Left cardiac atrium (tissue), 4 donors: ENCODE measurements at regions of chr14 and their contacts with region 1.

Region 1: DNA sequence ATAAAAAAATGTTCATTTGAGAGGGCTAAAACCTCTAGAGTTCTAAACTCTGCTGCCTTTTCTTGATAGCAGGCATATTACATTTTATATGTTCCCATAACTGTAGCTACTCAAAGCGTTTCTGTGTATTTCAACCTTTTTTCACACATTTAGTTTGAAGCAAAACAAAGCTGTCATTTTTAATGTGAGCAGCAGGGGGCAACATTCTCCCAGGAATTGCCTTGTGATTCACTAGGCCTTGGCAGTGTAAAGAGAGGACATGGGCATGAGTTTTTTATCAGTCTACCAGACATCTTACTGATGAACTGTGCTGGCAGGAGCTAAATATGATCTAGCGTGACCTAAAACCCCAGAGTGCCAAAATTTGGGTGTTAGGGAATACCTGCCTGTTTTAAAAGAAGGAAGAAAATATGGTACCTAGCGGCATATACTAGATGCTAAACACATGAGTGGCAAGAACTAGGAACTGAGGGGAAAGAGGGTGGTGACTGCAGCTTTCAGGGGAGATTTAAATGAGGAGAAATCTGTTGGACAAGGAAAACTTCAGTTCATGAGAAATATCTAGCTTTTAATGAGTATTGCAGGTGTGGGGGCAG is 65.3 kb downstream of the IFT43 start:
- DNase-seq: no peak
- ATAC-seq: peak; percentile 78 to 80

Region 2: GRCh38 chr14:76352639-76353281 is 301.9 kb after region 1 on chr14:
- intact Hi-C with region 1: loop called (anchors 2 to 10 kb)
- DNase-seq: peak; percentile 72
- ATAC-seq: peak; percentile 85 to 89

Region 3: DNA sequence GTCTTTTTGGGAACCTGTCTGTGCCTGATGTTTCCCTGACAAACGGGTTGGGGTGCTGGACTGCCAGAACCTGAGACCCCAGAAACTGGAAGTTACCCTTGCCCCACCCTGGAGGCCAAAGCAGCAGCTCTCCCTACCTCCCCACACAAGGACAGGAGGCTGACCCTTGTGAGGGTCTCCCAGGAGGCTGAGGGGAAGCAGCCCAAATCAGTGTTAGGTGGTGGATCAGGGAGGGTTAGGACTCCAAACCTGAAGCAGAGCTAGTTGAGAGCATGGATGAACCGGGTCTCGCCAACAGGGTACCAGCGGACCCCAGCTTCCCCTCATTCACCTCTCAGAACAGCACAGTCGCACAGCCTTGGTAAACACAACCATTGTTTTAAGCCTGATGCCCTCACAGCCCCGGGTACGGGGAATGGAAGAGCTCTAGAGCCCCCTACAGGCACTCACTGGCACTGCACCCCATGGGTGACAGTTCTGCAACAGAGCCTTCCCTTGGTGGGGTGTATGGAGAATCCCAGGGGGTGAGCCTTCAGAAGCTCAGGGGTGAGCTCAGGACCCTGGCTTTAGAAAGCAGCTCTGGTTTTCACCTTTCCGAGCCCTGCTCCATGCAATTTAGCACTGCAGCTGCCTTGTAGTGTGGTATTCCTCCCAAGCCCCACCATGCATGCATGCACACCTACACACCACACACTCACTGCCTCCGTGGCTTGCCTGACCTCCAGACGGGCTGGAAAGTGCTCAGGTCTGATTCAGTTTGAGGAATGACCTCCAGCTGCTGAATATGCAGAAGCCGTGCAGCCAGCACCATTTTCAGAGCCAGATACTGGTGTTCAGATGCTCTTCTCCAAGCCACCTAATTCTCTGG is 336.3 kb after region 1 on chr14:
- intact Hi-C with region 1: loop called (anchors 5 to 10 kb)
- DNase-seq: peak; percentile 64
- ATAC-seq: peak; percentile 84 to 90

Region 4: GRCh38 chr14:76647697-76648298 is 596.9 kb after region 1 on chr14:
- intact Hi-C with region 1: loop called (anchors 5 to 10 kb)
- DNase-seq: no peak
- ATAC-seq: peak; percentile 46 to 72